Heart left ventricle (tissue), 16 donors: ENCODE measurements at regions of chr14 and their contacts with region 1.

Region 1: GRCh38 chr14:56117765-56118610 is at the start of gene PELI2:
- DNase-seq: peak; percentile 74 to 91 (median 80)
- ATAC-seq: peak; percentile 69 to 87 (median 82)
- H3K4me3 ChIP-seq: peak within 1 kb of the TSS; percentile 57 to 98 (median 82)
- H3K27ac ChIP-seq: peak within 1 kb of the TSS; percentile 59 to 90 (median 86)
- H3K4me1 ChIP-seq: peaks cover 0 to 34% (median 7%) of the 10 kb centered on the region in 12 donors
- H3K27me3 ChIP-seq: no peaks in the 10 kb centered on the region
- CTCF ChIP-seq: peak in 7 of 12 donors; percentile 5 to 32 (median 12)
- POLR2A ChIP-seq: peak in 1 of 2 donors; percentile 60
- total RNA-seq, gene PELI2: 1.1 to 5.2 (median 3.3) TPM

Region 2: GRCh38 chr14:55715889-55716288 is 402.1 kb before region 1 on chr14:
- intact Hi-C with region 1: loop called in 1 of 10 experiments (anchors 10 kb)
- DNase-seq: peak in 3 of 5 donors; percentile 11 to 25 (median 24)
- ATAC-seq: peak; percentile 51 to 69 (median 64)
- H3K4me3 ChIP-seq: no peak overlapping the region
- H3K27ac ChIP-seq: peak overlapping the region in 1 of 12 donors; percentile 33
- H3K4me1 ChIP-seq: peaks cover 0 to 5% (median 1%) of the 10 kb centered on the region in 12 donors
- H3K27me3 ChIP-seq: no peaks in the 10 kb centered on the region
- CTCF ChIP-seq: no peak
- POLR2A ChIP-seq: no peak

Region 3: DNA sequence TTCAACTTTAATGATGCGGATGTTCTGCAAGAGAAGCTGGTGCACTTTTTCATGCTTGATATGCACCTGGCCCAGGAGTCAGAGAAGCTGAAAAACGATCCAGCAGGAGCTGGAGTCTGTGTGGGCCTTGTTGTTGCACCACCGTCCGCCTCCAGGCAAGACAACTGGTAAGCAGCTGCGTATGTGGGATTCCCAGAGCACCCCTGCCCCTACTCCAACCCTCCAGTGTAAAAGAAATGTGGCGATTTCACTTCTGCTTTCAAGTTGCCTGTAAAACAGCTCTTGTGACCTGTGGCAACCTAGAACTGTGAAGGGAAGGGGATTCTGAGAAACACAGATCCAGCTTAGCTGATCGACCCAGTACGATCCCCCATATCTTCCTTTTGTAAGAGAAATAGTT is 153.9 kb before region 1 on chr14:
- intact Hi-C with region 1: no loop called
- DNase-seq: no peak
- ATAC-seq: no peak
- H3K4me3 ChIP-seq: no peak overlapping the region
- H3K27ac ChIP-seq: no peak overlapping the region
- H3K4me1 ChIP-seq: peaks cover 0 to 8% (median 0%) of the 10 kb centered on the region in 12 donors
- H3K27me3 ChIP-seq: no peaks in the 10 kb centered on the region
- CTCF ChIP-seq: no peak
- POLR2A ChIP-seq: no peak

Region 4: DNA sequence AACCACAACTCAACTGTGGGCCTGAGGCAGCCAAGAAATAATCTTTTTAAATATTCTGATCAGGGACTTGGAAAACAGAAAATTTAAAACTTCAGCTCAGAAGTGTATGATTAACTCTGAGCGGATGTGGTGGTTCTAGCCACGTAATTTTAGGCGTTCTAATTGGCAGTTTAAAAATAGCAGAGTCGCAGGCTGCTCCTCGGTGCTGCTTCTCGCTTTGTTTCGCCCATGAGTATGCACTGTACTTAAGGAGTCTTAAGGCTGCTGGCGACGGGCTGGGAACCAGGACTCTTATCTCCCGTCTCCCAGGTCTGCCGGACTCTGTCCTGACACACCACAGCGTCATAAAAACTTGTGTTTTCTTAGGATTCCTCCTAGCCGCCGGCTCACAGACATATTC is 113.2 kb before region 1 on chr14:
- intact Hi-C with region 1: no loop called
- DNase-seq: peak in 3 of 5 donors; percentile 11 to 34 (median 33)
- ATAC-seq: peak; percentile 71 to 86 (median 80)
- H3K4me3 ChIP-seq: peak overlapping the region in 10 of 12 donors; percentile 1 to 44 (median 20)
- H3K27ac ChIP-seq: peak overlapping the region in 10 of 12 donors; percentile 1 to 64 (median 45)
- H3K4me1 ChIP-seq: peaks cover 0 to 28% (median 0%) of the 10 kb centered on the region in 12 donors
- H3K27me3 ChIP-seq: no peaks in the 10 kb centered on the region
- CTCF ChIP-seq: no peak
- POLR2A ChIP-seq: no peak

Region 5: GRCh38 chr14:56216626-56217379 is 98.8 kb after region 1 on chr14:
- intact Hi-C with region 1: loop called in 1 of 10 experiments (anchors 5 kb)
- DNase-seq: peak; percentile 46 to 80 (median 68)
- ATAC-seq: peak in 2 of 4 donors; percentile 44 to 58
- H3K4me3 ChIP-seq: no peak overlapping the region
- H3K27ac ChIP-seq: no peak overlapping the region
- H3K4me1 ChIP-seq: peaks cover 0 to 58% (median 43%) of the 10 kb centered on the region in 12 donors
- H3K27me3 ChIP-seq: no peaks in the 10 kb centered on the region
- CTCF ChIP-seq: no peak
- POLR2A ChIP-seq: no peak

Region 6: DNA sequence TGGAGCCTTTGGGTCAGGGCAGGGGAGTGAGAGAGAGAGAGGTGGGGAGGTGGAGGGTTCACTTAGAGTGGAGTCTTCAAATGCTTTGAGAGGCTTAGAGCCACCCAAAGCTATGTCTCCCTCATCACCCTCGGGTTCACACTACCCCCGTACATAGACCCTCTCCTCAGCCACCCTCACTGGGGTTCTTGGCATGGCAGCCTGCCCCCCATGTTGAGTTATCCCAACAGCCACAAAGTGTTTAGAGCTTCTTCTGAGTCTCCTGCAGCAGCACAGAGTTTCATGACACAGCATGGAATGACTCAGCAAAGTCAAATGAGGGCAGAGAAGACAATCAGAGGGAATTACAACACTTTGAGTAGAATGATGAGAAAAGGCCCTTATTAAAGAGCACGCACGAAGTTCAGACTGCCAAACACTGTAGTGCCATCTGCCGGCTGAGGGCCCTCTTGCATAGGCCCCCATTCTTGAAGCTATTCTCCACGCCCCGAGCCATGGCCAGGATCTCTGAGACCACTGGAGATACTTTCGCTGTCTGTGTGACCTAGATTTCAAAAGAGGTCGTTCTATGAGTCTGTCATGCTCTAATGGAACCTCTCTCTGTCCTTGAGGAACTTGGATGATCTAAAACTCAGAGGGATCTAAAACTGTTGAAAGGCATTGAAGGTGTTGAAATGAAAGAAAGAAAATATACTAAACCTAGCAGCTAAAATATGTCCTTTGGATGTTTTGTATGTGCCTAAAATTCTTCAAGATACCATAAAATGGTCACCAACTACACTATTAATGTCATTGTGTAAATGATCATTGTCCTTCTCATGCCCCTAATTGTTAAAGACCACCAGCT is 222.1 kb after region 1 on chr14:
- intact Hi-C with region 1: loop called in 4 of 10 experiments (anchors 5 to 10 kb)
- DNase-seq: peak; percentile 67 to 80 (median 73)
- ATAC-seq: peak; percentile 84 to 95 (median 91)
- H3K4me3 ChIP-seq: no peak overlapping the region
- H3K27ac ChIP-seq: peak overlapping the region in 1 of 12 donors; percentile 8
- H3K4me1 ChIP-seq: peaks cover 0 to 33% (median 21%) of the 10 kb centered on the region in 12 donors
- H3K27me3 ChIP-seq: no peaks in the 10 kb centered on the region
- CTCF ChIP-seq: peak; percentile 65 to 92 (median 82)
- POLR2A ChIP-seq: no peak